ENCODE measurements at regions of chr17 and their contacts with region 1.

Region 1: DNA sequence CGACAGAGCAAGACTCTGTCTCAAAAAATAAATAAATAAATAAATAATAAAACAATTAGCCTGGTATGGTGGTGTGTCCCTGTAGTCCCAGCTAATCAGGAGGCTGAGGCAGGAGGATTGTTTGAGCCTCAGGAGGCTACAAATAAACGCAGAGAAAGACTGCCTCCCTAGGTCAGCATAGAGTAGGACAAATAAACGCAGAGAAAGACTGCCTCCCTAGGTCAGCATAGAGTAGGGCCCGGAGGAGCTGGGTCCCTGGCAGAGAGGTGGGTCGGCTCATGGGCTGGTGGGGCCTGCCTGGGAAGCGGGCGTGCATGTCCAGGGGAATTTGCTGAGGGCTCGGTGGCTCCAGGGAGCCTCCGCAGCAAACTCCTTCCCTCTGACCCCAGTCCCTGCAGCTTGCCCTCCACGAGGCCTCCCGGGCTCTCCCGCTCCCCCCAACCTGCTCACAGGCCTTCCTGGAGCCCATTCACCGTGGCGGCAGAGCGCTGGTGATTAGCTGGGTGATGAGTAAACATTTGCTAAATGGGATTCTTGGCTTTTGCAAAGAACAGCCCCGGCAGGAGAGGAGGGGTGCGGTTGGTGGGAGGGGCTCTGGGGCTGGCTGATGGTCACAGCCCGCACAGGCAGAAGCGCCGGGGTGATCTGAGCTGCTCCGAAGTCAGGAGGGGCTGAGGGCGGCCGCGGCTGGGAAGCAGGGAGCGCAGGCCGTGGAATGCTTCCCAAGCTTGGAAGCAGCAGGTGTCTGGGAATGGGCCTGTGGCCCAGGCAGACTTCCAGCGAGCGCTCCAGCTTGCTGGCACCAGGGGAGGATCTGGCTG is 93.2 kb downstream of the RTN4RL1 start:
- DNase-seq: no peak
- H3K4me3 ChIP-seq: no peak overlapping the region
- H3K4me3 Mint-ChIP-seq: no peak overlapping the region
- H3K27ac ChIP-seq: no peak overlapping the region
- H3K27ac Mint-ChIP-seq: no peak overlapping the region
- H3K4me1 ChIP-seq: no peaks in the 10 kb centered on the region
- H3K4me1 Mint-ChIP-seq: no peaks in the 10 kb centered on the region
- H3K27me3 ChIP-seq: no peaks in the 10 kb centered on the region
- H3K27me3 Mint-ChIP-seq: peaks cover 0 to 4% of the 10 kb centered on the region in 2 donors

Region 2: GRCh38 chr17:1847191-1847590 is 84.8 kb before region 1 on chr17:
- CTCF ChIA-PET with region 1: no interaction called
- POLR2A ChIA-PET with region 1: no interaction called
- DNase-seq: no peak
- H3K4me3 ChIP-seq: no peak overlapping the region
- H3K4me3 Mint-ChIP-seq: no peak overlapping the region
- H3K27ac ChIP-seq: no peak overlapping the region
- H3K27ac Mint-ChIP-seq: peak overlapping the region in 2 of 8 donors; percentile 42 to 82
- H3K4me1 ChIP-seq: no peaks in the 10 kb centered on the region
- H3K4me1 Mint-ChIP-seq: peaks cover 0 to 13% (median 4%) of the 10 kb centered on the region in 3 donors
- H3K27me3 ChIP-seq: no peaks in the 10 kb centered on the region
- H3K27me3 Mint-ChIP-seq: no peaks in the 10 kb centered on the region

Region 3: GRCh38 chr17:1920948-1921351 is 11.0 kb before region 1 on chr17:
- CTCF ChIA-PET with region 1: no interaction called
- POLR2A ChIA-PET with region 1: no interaction called
- DNase-seq: no peak
- H3K4me3 ChIP-seq: no peak overlapping the region
- H3K4me3 Mint-ChIP-seq: no peak overlapping the region
- H3K27ac ChIP-seq: no peak overlapping the region
- H3K27ac Mint-ChIP-seq: no peak overlapping the region
- H3K4me1 ChIP-seq: no peaks in the 10 kb centered on the region
- H3K4me1 Mint-ChIP-seq: no peaks in the 10 kb centered on the region
- H3K27me3 ChIP-seq: no peaks in the 10 kb centered on the region
- H3K27me3 Mint-ChIP-seq: peaks cover 3 to 6% of the 10 kb centered on the region in 2 donors

Region 4: GRCh38 chr17:1989135-1989534 is 57.2 kb after region 1 on chr17:
- CTCF ChIA-PET with region 1: no interaction called
- POLR2A ChIA-PET with region 1: no interaction called
- DNase-seq: no peak
- H3K4me3 ChIP-seq: no peak overlapping the region
- H3K4me3 Mint-ChIP-seq: no peak overlapping the region
- H3K27ac ChIP-seq: no peak overlapping the region
- H3K27ac Mint-ChIP-seq: peak overlapping the region in 1 of 8 donors; percentile 69
- H3K4me1 ChIP-seq: no peaks in the 10 kb centered on the region
- H3K4me1 Mint-ChIP-seq: no peaks in the 10 kb centered on the region
- H3K27me3 ChIP-seq: no peaks in the 10 kb centered on the region
- H3K27me3 Mint-ChIP-seq: peaks cover 8% of the 10 kb centered on the region in 2 donors

Region 5: DNA sequence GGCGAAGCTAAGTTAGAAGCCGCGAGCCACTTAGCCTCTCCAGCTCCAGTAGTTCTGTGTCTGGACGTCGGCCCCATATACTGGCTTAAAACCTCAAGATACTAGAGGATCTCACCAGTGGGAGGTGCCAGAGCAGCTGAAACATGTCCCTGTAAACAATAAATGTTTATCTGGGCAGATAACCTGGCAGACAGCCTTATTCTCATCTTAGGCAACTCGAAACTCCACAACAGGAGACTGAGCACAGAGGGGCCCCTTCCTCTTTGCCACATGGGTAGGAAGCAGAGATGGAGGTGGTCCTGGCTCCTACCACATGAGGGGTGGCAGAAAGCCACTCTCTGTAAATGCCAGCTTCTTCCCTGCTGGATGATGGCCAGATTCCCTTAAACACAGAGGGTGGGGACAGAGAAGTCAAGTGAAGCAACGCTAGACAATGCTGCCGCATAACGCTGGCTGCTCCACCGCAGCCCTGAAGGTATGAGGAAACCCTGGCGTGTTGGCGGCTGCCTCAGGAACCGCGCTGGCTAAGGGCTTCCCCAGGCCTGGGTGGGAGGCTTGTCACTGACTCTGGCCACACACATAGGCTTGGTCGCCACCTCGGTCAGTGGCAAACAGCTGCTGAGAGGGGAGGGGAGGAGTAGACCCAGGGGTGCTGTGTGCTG is 190.8 kb after region 1 on chr17:
- CTCF ChIA-PET with region 1: no interaction called
- POLR2A ChIA-PET with region 1: interaction called, 11 read pairs
- DNase-seq: no peak
- H3K4me3 ChIP-seq: no peak overlapping the region
- H3K4me3 Mint-ChIP-seq: no peak overlapping the region
- H3K27ac ChIP-seq: no peak overlapping the region
- H3K27ac Mint-ChIP-seq: peak overlapping the region in 1 of 8 donors; percentile 8
- H3K4me1 ChIP-seq: peaks cover 13% of the 10 kb centered on the region
- H3K4me1 Mint-ChIP-seq: peaks cover 15 to 22% (median 17%) of the 10 kb centered on the region in 3 donors
- H3K27me3 ChIP-seq: no peaks in the 10 kb centered on the region
- H3K27me3 Mint-ChIP-seq: no peaks in the 10 kb centered on the region